ENCODE measurements at regions of chr14 and their contacts with region 1.

Region 1: DNA sequence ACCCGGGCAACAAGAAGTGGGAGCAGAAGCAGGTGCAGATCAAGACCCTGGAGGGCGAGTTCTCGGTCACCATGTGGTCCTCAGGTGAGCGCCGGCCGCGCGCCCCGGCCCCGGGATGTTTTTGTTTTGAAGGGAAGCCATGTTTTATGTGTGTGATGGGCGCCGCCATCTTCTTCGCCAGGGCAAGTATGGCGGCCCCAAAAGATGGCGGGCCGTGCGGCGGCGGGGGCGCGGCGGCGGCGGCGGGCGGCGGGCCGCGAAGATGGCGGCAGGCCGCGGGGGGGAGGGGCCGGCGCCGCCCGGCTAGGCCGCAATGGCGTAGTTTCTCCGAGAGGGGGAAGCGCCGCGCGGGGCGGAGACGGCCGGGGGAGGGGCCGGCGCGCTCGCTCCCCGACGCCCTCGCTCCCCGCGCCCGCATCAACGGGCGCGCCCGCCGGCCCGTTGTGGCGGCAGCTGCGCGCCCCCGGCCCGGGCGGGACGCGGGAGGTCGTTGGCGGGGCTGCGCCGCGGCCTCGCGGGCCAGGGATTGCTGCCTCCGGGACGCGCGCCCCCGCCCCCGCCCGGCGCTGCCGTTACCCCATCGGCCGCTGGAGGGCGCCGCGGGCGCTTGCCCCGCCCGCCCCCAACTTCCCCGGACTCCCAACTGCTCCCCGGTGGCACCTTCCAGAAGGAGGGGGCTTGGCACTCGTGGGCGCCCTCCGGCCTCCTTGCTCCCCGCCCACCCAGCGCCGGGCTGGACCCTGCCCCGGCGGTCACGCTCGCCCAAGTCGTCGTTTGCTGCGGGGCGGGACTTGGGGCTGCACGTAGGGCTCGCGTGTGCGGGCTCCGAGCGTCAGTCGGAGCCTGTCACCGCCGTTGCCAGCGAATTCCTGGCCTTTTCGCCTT is 1.1 kb downstream of the YY1 start:
- DNase-seq: peak; percentile 30 to 91 (median 79)

Region 2: GRCh38 chr14:100285021-100285912 is 45.2 kb after region 1 on chr14:
- intact Hi-C with region 1: loop called (anchors 5 kb)
- DNase-seq: peak in 39 of 42 donors; percentile 39 to 86 (median 69)

Region 3: GRCh38 chr14:100306420-100307219 is 66.5 kb after region 1 on chr14 and contains the start of gene SLC25A29:
- intact Hi-C with region 1: loop called (anchors 5 kb)
- DNase-seq: peak; percentile 76 to 96 (median 93)

Region 4: DNA sequence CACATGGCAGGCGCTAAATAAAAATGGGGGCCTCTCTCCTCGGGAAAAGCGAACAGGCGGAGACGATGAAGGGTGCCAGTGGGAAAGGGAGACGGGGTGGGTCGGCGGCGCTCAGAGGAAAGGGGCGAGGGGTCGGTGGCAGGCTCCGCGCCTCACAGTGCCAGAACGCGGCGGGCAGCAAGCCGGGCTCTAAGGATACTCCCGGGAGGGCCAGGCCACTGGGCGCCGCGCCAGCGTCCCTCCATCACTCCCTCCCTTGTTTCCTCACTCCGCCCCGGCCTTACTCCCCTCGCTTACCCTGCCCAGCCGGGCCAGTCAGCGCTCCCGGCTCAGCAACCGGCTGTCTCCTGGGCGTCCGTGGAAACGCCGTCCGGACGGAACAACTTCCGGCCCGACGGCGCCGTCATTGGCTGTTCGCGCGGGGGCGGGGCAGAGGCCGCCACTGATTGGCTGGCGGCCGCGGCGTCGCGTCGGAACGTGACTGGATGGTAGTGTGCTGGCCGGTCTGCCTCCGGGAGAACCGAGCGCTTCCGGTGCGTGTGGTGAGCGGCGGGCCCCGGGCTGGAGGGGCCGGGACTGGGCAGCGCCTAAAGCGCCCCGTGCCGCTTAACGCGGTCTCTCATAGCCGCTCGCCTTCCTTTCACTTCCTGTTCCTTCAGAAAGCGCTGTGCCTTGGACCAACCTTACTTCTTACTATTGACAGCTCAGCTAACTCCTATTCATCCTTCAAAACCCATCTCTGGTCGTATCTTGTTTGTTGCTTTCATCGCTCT is 136.1 kb after region 1 on chr14:
- intact Hi-C with region 1: loop called (anchors 2 kb)
- DNase-seq: peak; percentile 72 to 97 (median 92)

Region 5: GRCh38 chr14:100466111-100466856 is 226.2 kb after region 1 on chr14:
- intact Hi-C with region 1: no loop called
- DNase-seq: no peak